ENCODE measurements at regions of chr1 and their contacts with region 1.

Region 1: DNA sequence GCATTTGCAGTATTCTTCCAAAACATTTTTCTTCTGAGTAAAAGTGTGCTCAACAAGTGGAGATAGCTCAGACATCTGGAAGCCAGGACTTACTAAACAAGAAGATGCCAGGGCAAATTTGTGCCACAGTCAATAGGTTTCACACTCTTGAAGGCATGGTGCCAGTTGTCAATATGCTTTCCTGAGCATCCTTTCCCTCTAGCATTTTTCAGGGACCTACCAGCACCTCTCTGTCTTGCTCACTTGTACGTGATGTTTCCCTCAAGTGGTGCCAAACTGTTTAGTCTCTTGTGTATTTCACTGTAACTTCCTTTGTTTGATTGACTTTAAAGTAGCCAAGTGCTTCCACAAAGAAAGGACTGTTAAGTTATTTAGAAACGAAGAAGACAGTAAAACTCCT is 194.0 kb upstream of the SGIP1 start:
- DNase-seq: no peak
- ATAC-seq: no peak
- H3K4me3 Mint-ChIP-seq: peak overlapping the region; percentile 61
- H3K27ac Mint-ChIP-seq: peak overlapping the region; percentile 79
- H3K4me1 Mint-ChIP-seq: peaks cover 80% of the 10 kb centered on the region
- H3K27me3 Mint-ChIP-seq: no peaks in the 10 kb centered on the region

Region 2: DNA sequence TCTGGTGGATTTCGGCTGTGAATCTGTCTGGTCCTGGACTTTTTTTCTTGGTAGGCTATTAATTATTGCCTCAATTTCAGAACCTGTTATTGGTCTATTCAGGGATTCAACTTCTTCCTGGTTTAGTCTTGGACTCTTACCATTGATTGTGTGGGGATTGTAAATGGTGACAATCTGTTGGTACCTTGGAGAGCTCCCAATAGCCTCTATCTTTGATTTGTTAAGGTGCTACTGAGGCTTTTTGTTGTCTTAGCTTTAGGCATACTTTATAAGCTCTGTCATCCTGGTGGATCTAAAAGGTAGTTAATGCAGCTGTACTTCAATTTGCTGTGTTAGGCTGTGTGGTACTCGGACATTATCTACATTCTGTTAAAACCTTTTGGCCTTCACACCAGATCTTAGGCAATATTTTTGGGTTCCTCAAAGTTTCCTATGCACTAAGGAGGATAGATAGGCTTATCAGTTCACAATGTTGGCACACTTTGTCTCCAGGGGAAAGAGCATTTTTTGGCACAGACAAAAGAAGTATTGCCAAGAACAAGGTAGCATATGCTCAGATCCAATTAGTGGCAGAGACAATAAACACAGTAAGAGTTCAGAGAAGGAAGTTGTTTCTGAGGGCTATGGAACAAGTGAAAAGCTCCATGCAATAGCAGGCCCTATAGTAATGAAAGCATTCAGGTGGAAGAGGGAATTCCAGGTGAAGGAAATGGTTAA is 316.9 kb before region 1 on chr1:
- CTCF ChIA-PET with region 1: no interaction called
- POLR2A ChIA-PET with region 1: no interaction called
- DNase-seq: no peak
- ATAC-seq: no peak
- H3K4me3 Mint-ChIP-seq: no peak overlapping the region
- H3K27ac Mint-ChIP-seq: no peak overlapping the region
- H3K4me1 Mint-ChIP-seq: no peaks in the 10 kb centered on the region
- H3K27me3 Mint-ChIP-seq: no peaks in the 10 kb centered on the region

Region 3: GRCh38 chr1:66073388-66073787 is 266.6 kb before region 1 on chr1:
- CTCF ChIA-PET with region 1: no interaction called
- POLR2A ChIA-PET with region 1: no interaction called
- DNase-seq: no peak
- ATAC-seq: no peak
- H3K4me3 Mint-ChIP-seq: no peak overlapping the region
- H3K27ac Mint-ChIP-seq: no peak overlapping the region
- H3K4me1 Mint-ChIP-seq: no peaks in the 10 kb centered on the region
- H3K27me3 Mint-ChIP-seq: peaks cover 8% of the 10 kb centered on the region

Region 4: GRCh38 chr1:66253330-66253921 is 86.5 kb before region 1 on chr1:
- CTCF ChIA-PET with region 1: interaction called, 14 read pairs
- POLR2A ChIA-PET with region 1: no interaction called
- DNase-seq: peak; percentile 46
- ATAC-seq: peak; percentile 83
- H3K4me3 Mint-ChIP-seq: no peak overlapping the region
- H3K27ac Mint-ChIP-seq: no peak overlapping the region
- H3K4me1 Mint-ChIP-seq: peaks cover 37% of the 10 kb centered on the region
- H3K27me3 Mint-ChIP-seq: no peaks in the 10 kb centered on the region

Region 5: GRCh38 chr1:66282343-66282852 is 57.5 kb before region 1 on chr1:
- CTCF ChIA-PET with region 1: interaction called, 32 read pairs
- POLR2A ChIA-PET with region 1: interaction called, 13 read pairs
- DNase-seq: peak; percentile 72
- ATAC-seq: peak; percentile 91
- H3K4me3 Mint-ChIP-seq: no peak overlapping the region
- H3K27ac Mint-ChIP-seq: peak overlapping the region; percentile 66
- H3K4me1 Mint-ChIP-seq: peaks cover 91% of the 10 kb centered on the region
- H3K27me3 Mint-ChIP-seq: no peaks in the 10 kb centered on the region

Region 6: GRCh38 chr1:66350001-66350547 is 10.1 kb after region 1 on chr1:
- CTCF ChIA-PET with region 1: interaction called, 76 read pairs
- POLR2A ChIA-PET with region 1: interaction called, 87 read pairs
- DNase-seq: peak; percentile 60
- ATAC-seq: peak; percentile 67
- H3K4me3 Mint-ChIP-seq: peak overlapping the region; percentile 77
- H3K27ac Mint-ChIP-seq: peak overlapping the region; percentile 84
- H3K4me1 Mint-ChIP-seq: peaks cover 88% of the 10 kb centered on the region
- H3K27me3 Mint-ChIP-seq: no peaks in the 10 kb centered on the region

Region 7: GRCh38 chr1:66374561-66375111 is 34.7 kb after region 1 on chr1:
- CTCF ChIA-PET with region 1: interaction called, 14 read pairs
- POLR2A ChIA-PET with region 1: interaction called, 4 read pairs
- DNase-seq: no peak
- ATAC-seq: peak; percentile 49
- H3K4me3 Mint-ChIP-seq: peak overlapping the region; percentile 49
- H3K27ac Mint-ChIP-seq: peak overlapping the region; percentile 89
- H3K4me1 Mint-ChIP-seq: peaks cover 53% of the 10 kb centered on the region
- H3K27me3 Mint-ChIP-seq: no peaks in the 10 kb centered on the region

Region 8: DNA sequence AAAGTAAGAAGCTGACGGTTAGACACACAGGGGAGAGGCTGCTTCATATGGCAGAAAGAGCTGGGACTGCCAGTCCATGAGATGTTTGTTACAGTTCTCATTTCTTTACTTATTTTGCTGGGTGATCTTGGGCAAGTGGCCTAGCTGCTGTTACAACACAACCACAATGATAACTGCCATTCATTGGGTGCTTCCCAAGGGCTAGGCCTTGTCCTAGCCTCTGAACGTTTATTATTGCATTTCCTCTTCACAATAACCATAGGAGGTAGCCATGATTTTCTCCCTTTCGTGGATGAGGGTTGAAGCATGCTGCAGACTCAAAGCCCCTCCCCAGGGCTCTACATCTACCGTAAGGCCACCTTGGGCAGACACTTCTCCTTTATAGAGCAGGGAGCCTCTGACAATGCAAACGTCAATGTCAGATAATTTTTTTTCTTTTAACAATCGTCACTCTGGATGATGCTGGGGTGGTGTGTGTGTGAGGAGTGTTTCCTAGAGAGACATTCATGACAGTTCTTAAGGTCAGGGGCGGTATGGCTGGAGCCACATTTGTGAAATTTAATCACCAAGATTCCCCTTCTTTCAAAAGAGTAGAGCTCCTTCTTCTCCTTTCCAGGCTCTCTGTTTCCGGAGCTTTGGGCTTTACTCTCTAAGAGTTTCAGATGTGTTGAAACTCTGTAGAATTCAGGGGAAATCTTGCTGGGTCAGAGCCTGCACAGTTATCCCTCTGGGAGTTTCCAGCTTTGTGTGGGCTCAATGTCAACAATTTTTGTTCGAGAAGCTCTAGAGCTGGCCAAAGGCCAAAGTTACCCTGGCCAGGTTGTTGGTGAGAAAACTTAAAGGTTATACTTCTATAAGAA is 55.5 kb after region 1 on chr1:
- CTCF ChIA-PET with region 1: no interaction called
- POLR2A ChIA-PET with region 1: no interaction called
- DNase-seq: no peak
- ATAC-seq: no peak
- H3K4me3 Mint-ChIP-seq: no peak overlapping the region
- H3K27ac Mint-ChIP-seq: no peak overlapping the region
- H3K4me1 Mint-ChIP-seq: peaks cover 11% of the 10 kb centered on the region
- H3K27me3 Mint-ChIP-seq: no peaks in the 10 kb centered on the region